ENCODE measurements at regions of chr14 and their contacts with region 1.

Region 1: GRCh38 chr14:94036313-94037050 is 10.3 kb downstream of the OTUB2 start:
- DNase-seq: no peak
- H3K4me3 ChIP-seq: no peak overlapping the region
- H3K27ac ChIP-seq: no peak overlapping the region
- H3K4me1 ChIP-seq: peaks cover 0 to 3% (median under 1%) of the 10 kb centered on the region in 4 donors
- H3K27me3 ChIP-seq: no peaks in the 10 kb centered on the region
- CTCF ChIP-seq: peak; percentile 71 to 87 (median 79)
- EP300 ChIP-seq: no peak
- POLR2A ChIP-seq: no peak

Region 2: DNA sequence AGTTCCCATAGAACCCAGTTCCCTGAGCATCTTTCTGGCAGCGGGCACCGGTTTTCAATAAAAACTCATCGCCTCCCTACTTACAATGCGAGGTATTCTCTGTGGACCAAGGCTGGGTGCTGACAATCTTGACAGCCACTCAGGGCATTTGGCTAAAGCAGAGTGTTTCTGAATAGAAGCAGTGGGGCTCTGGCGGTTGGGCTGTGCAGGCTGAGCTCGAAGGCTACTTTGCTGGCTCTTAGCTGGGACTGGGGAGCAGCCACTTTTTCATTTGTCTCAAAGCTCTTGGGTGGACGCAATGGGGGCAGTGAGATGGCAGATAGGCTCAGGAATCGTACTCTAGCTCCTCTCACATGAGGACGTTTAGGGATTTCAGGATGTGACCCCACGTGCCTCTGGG is 454.0 kb before region 1 on chr14:
- intact Hi-C with region 1: no loop called
- DNase-seq: peak; percentile 68
- H3K4me3 ChIP-seq: no peak overlapping the region
- H3K27ac ChIP-seq: no peak overlapping the region
- H3K4me1 ChIP-seq: no peaks in the 10 kb centered on the region
- H3K27me3 ChIP-seq: peaks cover 0 to 12% (median 0%) of the 10 kb centered on the region in 4 donors
- CTCF ChIP-seq: no peak
- EP300 ChIP-seq: no peak
- POLR2A ChIP-seq: no peak

Region 3: DNA sequence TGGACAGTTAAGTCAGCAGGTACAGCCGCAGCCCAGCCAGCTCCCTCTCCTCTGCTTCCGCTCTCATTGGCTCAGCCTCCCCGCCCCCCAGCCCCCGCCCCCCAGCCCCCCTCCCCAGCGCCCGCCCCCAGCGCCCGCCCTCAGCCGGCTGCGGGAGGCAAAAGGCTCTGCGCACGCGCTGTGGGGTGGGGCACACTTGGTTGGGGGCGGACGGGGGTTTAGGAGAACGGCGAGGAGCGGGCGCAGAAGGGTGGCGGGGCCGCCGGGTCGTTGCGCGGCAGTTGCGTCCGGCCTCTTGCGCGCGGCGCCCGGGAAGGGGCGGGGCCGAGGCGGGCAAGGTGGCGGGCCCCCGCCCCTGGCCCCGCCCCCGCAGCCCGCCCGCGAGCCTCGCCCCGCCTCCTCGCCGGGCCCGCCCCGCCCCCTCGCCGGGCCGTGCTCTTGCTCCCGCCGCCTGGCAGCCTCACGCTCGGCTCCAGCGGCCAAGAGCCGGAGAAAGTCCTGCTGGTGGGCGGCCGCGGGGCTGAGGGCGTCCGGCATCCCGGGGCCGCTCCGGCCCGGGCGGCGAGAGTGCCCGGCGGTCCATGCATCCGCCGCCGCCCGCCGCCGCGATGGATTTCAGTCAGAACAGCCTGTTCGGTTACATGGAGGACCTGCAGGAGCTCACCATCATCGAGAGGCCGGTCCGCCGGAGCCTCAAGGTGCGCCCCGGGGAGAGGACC is 137.6 kb after region 1 on chr14 and contains the start of gene PPP4R4:
- intact Hi-C with region 1: loop called (anchors 5 kb)
- DNase-seq: no peak
- H3K4me3 ChIP-seq: peak within 1 kb of the TSS; percentile 65 to 79 (median 68)
- H3K27ac ChIP-seq: peak within 1 kb of the TSS in 3 of 4 donors; percentile 46
- H3K4me1 ChIP-seq: peaks cover 11 to 25% (median 24%) of the 10 kb centered on the region in 4 donors
- H3K27me3 ChIP-seq: peaks cover 2 to 83% (median 23%) of the 10 kb centered on the region in 4 donors
- CTCF ChIP-seq: no peak
- EP300 ChIP-seq: no peak
- POLR2A ChIP-seq: no peak
- total RNA-seq, gene PPP4R4: 0.19 to 0.83 (median 0.34) TPM in 3 of 4 donors, not detected in the other

Measured in esophagus muscularis mucosa (tissue), 4 donors.